ENCODE measurements at regions of chr3 and their contacts with region 1.

Region 1: GRCh38 chr3:192816351-192816750 is 89.0 kb upstream of the FGF12 start:
- DNase-seq: no peak
- H3K4me3 ChIP-seq: no peak overlapping the region
- H3K27me3 ChIP-seq: no peaks in the 10 kb centered on the region
- CTCF ChIP-seq: peak; percentile 59

Region 2: GRCh38 chr3:192802957-192803899 is 13.1 kb before region 1 on chr3:
- CTCF ChIA-PET with region 1: interaction called, 18 read pairs
- POLR2A ChIA-PET with region 1: no interaction called
- DNase-seq: no peak
- H3K4me3 ChIP-seq: no peak overlapping the region
- H3K27me3 ChIP-seq: no peaks in the 10 kb centered on the region
- CTCF ChIP-seq: peak; percentile 66

Region 3: GRCh38 chr3:192917404-192918274 is 101.3 kb after region 1 on chr3 and contains the start of gene MB21D2:
- CTCF ChIA-PET with region 1: interaction called, 69 read pairs
- POLR2A ChIA-PET with region 1: no interaction called
- DNase-seq: no peak
- H3K4me3 ChIP-seq: peak within 1 kb of the TSS; percentile 79
- H3K27me3 ChIP-seq: no peaks in the 10 kb centered on the region
- CTCF ChIP-seq: no peak
- polyA plus RNA-seq, gene MB21D2: 12.3 and 13.3 TPM in 2 replicates

Region 4: GRCh38 chr3:192957441-192958021 is 141.2 kb after region 1 on chr3:
- CTCF ChIA-PET with region 1: interaction called, 10 read pairs
- POLR2A ChIA-PET with region 1: no interaction called
- DNase-seq: peak; percentile 74
- H3K4me3 ChIP-seq: peak overlapping the region; percentile 30
- H3K27me3 ChIP-seq: no peaks in the 10 kb centered on the region
- CTCF ChIP-seq: no peak

Region 5: DNA sequence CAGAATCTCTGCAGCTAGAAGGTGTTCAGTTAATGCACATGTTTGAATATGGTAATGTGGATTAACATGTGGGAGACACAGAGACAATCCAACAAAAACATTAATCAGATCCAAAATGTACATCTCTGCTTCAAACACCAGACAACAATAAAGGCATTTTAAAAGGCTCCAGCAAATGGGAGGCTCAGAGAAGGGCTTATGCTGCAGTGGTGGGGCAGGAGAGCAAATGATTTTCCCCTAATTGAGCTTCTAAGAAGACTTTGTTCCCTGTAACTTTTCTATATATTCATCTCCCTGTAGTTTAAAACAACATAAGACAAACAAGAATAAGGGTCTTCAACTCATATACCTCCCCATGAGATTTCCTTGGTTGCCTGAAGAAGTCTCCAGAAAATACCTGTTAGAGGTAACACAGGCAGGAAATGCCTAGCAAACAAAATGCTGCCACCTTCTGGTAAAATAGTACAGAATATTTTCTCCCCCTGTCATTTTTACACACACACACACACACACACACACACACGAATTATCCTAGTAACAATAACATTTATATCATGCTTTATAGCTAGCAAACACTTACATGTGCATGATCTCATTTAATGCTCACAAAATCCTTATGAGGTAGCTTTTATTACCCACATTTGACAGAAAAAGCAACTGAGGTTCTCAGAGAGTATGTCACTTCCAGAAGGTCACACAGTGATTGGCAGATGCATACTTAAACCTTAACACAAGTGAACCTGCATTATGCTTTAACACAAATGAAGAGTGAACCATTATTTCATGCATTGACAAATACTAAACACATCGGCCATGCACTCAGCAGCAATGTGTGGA is 224.7 kb after region 1 on chr3:
- CTCF ChIA-PET with region 1: interaction called, 331 read pairs
- POLR2A ChIA-PET with region 1: interaction called, 4 read pairs
- DNase-seq: no peak
- H3K4me3 ChIP-seq: no peak overlapping the region
- H3K27me3 ChIP-seq: no peaks in the 10 kb centered on the region
- CTCF ChIP-seq: peak; percentile 52

Region 6: DNA sequence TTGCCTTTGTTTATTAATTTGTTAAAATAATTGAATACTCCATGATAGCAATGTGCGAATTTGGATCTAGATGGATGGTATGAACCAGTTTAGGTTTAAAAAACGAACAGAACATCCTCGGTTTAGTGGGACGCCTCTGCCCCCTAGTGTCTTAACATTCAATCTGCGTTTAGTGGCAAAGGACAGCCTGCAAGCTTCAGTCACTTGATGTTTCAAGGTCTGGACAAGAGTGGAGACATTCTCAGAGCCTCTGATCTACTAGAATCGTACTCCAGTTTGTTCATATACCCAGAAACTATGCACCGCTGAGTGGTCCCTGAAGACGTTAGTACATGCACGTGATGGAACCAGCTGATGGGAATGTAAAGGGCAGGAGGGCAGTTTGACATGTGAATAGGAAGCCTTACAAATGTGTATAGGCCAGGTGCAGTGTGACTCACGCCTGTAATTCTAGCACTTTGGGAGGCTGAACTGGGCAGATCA is 756.1 kb after region 1 on chr3:
- CTCF ChIA-PET with region 1: interaction called, 26 read pairs
- POLR2A ChIA-PET with region 1: no interaction called
- DNase-seq: no peak
- H3K4me3 ChIP-seq: no peak overlapping the region
- H3K27me3 ChIP-seq: 0 out of 2 replicates have a peak, but pooled peaks cover 2% of the 10 kb centered on the region
- CTCF ChIP-seq: peak; percentile 81